Right lobe of liver (tissue), 6 donors: ENCODE measurements at regions of chr3 and their contacts with region 1.

Region 1: DNA sequence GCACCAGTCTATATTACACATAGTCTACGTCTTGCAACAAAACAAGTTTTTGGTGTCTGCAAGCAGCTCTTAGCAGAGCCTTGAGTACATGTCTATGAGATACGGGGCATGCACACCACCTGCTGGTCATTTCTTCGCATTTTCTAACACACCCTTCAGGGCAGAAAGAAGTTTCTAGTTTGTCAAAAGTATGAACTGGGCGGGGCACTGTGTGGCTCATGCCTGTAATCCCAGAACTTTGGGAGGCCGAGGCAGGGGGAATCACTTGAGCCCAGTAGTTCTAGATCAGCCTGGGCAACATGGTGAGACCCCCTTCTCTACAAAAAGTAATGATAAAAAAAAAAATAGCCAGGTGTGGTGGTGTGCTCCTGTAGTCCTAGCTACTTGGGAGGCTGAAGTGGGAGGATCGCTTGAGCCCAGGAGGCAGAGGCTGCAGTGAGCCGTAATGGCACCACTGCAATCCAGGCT is 64.2 kb upstream of the ARL8B start:
- DNase-seq: peak; percentile 61 to 78 (median 72)
- ATAC-seq: peak; percentile 91 to 94 (median 92)
- H3K4me3 ChIP-seq: no peak overlapping the region
- H3K27ac ChIP-seq: no peak overlapping the region
- H3K4me1 ChIP-seq: no peaks in the 10 kb centered on the region
- H3K27me3 ChIP-seq: no peaks in the 10 kb centered on the region
- CTCF ChIP-seq: peak; percentile 75 to 93 (median 79)
- POLR2A ChIP-seq: no peak

Region 2: GRCh38 chr3:4703054-4703480 is 354.8 kb before region 1 on chr3:
- intact Hi-C with region 1: loop called in 1 of 2 experiments (anchors 10 kb)
- DNase-seq: no peak
- ATAC-seq: peak; percentile 85 to 97 (median 90)
- H3K4me3 ChIP-seq: no peak overlapping the region
- H3K27ac ChIP-seq: no peak overlapping the region
- H3K4me1 ChIP-seq: peaks cover 0 to 12% (median 0%) of the 10 kb centered on the region in 4 donors
- H3K27me3 ChIP-seq: no peaks in the 10 kb centered on the region
- CTCF ChIP-seq: no peak
- POLR2A ChIP-seq: no peak

Region 3: GRCh38 chr3:4712143-4712542 is 345.7 kb before region 1 on chr3:
- intact Hi-C with region 1: loop called (anchors 5 to 10 kb)
- DNase-seq: no peak
- ATAC-seq: peak in 3 of 4 donors; percentile 35 to 50 (median 45)
- H3K4me3 ChIP-seq: no peak overlapping the region
- H3K27ac ChIP-seq: no peak overlapping the region
- H3K4me1 ChIP-seq: peaks cover 0 to 8% (median 2%) of the 10 kb centered on the region in 4 donors
- H3K27me3 ChIP-seq: no peaks in the 10 kb centered on the region
- CTCF ChIP-seq: no peak
- POLR2A ChIP-seq: no peak

Region 4: GRCh38 chr3:4935347-4935746 is 122.5 kb before region 1 on chr3:
- intact Hi-C with region 1: no loop called
- DNase-seq: no peak
- ATAC-seq: no peak
- H3K4me3 ChIP-seq: no peak overlapping the region
- H3K27ac ChIP-seq: no peak overlapping the region
- H3K4me1 ChIP-seq: no peaks in the 10 kb centered on the region
- H3K27me3 ChIP-seq: no peaks in the 10 kb centered on the region
- CTCF ChIP-seq: no peak
- POLR2A ChIP-seq: no peak